Transverse colon (tissue), 4 donors: ENCODE measurements at regions of chr6 and their contacts with region 1.

Region 1: DNA sequence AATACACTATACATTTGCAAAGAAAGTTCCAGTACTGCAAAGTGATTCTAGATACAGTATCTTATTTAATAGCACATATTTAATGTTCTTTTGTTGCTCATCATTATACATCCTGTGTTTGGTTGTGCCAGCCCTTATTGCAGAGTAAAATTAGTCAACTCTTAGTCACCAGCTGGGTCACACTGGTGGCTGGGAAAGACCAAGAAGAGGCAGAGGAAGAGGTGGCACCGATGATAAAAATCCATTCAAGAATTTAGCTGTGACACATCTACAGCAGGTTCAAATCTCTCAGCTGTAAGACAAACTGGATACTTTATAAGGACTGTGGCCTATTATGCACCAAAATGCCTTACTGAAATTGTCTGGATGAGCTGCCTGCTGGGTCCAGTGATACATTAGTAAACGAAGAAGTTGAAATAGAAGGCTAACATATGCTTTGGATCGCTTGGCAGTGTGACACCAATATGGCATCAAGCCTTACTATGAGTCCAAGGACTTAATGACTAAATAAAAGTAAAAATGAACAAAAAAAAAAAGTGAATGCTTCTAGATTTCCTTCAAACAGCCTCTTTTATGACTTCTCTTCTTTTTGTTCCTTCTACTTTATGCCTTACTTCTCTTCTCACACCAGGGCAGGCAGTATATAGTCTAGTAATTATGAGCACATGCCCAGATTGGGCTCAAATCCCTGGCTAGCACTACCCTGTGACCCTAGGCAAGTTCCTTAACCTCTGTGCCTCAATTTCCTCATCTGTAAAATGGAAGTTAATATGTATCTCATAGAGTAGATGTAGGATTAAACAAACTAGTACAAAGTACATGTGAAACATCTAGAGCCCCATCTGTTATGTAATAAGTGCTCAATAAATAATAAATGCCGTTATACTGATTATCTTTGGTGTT is 29.4 kb upstream of the RNF8 start:
- DNase-seq: no peak
- H3K4me3 ChIP-seq: no peak overlapping the region
- H3K27ac ChIP-seq: peak overlapping the region in 2 of 4 donors; percentile 4 to 5
- H3K4me1 ChIP-seq: peaks cover 7 to 21% (median 8%) of the 10 kb centered on the region in 4 donors
- H3K27me3 ChIP-seq: no peaks in the 10 kb centered on the region
- CTCF ChIP-seq: no peak
- EP300 ChIP-seq: no peak
- POLR2A ChIP-seq: no peak

Region 2: DNA sequence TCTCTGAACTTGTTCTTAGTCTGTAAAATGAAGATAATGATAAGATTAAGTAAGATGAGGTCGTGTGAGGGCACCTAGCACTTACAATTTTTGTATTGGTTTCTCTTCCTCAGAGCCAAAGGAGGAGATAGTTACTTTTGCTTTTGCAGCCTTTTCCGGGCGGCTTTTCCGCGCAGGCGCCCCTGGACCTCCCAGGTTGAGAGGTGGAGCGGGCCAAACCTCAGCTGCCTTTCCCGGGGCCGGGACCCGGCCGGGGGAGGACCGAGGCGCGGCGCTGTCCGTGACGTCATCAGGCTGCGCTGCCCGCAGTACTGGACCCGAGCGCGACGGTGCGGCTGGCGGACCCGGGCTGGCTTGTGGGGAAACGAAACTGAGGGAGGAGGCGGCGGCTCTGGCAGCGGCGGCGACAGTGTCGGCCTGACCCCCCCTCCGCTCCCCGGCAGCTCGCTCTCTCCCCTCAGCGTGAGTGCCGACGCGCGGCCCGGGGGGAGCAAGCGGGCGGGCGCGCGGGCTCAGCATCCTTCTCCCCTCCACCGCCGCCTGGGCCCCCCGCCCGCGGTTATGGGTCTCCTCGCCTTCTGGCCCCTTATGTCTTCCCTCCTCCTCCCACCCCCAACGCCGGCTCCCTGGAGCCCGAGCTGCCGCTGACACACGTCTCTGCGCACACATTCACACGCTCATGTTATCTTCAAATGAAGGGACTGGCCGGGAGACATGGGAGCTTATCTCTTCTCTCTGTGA is 108.7 kb after region 1 on chr6 and contains the start of gene CMTR1:
- in situ Hi-C with region 1: no loop called
- intact Hi-C with region 1: no loop called
- DNase-seq: peak; percentile 97
- H3K4me3 ChIP-seq: peak within 1 kb of the TSS; percentile 88 to 98 (median 94)
- H3K27ac ChIP-seq: peak within 1 kb of the TSS; percentile 91 to 96 (median 94)
- H3K4me1 ChIP-seq: peaks cover 8 to 21% (median 15%) of the 10 kb centered on the region in 4 donors
- H3K27me3 ChIP-seq: peaks cover 9% of the 10 kb centered on the region
- CTCF ChIP-seq: peak in 1 of 5 experiments; percentile 39
- EP300 ChIP-seq: no peak
- POLR2A ChIP-seq: peak; percentile 78
- total RNA-seq, gene CMTR1: 16.5 to 40.6 (median 24.9) TPM

Region 3: DNA sequence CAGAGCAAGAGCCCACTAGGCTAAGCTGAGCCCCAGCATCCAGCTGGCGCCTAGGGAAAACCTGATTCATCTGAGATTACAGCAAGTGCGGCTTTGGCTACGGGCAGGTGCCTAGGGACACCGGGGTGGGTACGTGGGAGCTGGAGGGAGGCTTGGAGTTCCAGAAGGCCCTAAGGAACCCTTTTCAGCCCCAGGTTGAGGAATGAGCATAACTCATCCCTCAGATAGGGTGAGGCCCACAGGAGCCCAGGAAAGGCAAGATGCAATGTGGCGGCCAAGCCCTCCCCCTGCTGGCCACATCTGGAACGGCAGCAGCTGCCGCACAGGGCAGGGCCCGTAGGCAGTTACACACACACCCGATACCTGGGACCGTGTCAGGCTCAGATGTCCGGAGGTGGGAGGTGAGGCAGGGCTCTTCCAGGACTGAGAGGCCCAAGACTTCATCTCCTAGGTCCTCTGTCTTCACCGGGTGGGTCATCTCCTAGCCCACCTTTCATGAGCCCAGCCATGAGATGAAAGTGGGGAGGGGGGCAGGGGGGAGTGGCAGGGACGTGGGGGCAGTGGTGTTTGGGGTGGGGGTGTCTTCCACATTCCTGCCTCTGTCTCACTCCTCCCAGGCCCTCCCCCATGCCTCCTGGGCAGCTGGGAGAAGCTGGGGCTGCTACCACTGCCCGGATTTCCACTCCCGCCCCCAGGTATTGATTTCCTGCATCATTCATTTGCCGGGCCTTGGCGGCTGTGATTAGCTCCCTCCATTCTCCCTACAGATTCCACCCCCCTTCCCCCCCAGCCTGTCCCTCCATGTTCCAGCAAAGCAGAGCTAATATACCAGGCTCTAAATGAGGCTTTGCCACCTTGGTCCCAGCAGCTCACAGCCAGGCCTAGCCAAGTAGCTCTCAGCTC is 367.8 kb after region 1 on chr6:
- in situ Hi-C with region 1: loop called in 1 of 4 experiments (anchors 25 kb)
- intact Hi-C with region 1: loop called (anchors 10 kb)
- DNase-seq: peak; percentile 77
- H3K4me3 ChIP-seq: no peak overlapping the region
- H3K27ac ChIP-seq: no peak overlapping the region
- H3K4me1 ChIP-seq: peaks cover 0 to 18% (median 12%) of the 10 kb centered on the region in 4 donors
- H3K27me3 ChIP-seq: peaks cover 49% of the 10 kb centered on the region
- CTCF ChIP-seq: peak; percentile 88 to 99 (median 96)
- EP300 ChIP-seq: no peak
- POLR2A ChIP-seq: no peak